Activated CD8-positive, alpha-beta T cell treated with anti-CD3 and anti-CD28 coated beads for 36 hours (primary cell): ENCODE measurements at regions of chr3 and their contacts with region 1.

Region 1: DNA sequence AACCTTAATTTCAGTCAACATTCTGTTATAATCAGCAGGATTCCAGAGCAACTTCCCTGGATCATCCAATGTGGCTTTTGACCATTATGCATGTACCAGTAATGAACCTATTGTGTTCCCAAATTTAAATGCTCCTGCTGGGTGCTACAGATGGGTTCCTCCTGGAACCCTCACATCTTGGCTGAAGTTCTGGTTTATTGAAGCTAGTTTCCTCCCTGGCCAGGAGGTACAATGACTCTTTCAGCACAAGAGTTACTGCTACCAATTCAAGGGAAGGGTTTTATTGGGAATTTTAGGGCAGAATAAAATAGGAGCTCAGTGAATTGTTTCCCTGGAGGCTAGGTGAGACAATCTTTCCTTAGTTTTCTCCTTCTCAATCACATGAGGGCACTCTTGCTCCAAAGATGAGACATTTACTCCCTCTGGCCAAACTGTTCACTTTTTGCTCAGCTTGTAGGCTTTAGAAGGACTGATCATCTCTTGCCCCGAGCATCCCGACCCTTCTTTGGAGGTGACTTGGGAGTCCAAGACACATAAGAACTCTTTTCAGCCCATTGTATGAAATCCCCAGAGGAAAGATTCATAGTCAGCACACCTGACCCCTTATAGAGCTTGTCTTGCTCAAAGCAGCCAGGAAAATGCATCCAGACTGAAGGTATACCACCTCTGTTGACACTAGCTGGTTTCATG is 8.8 kb upstream of the NPHP3 start:
- DNase-seq: no peak
- ATAC-seq: no peak
- H3K4me3 Mint-ChIP-seq: no peak overlapping the region
- H3K27ac Mint-ChIP-seq: no peak overlapping the region
- H3K4me1 Mint-ChIP-seq: no peaks in the 10 kb centered on the region
- H3K27me3 Mint-ChIP-seq: peaks cover 21% of the 10 kb centered on the region
- CTCF ChIP-seq: peak; percentile 35

Region 2: DNA sequence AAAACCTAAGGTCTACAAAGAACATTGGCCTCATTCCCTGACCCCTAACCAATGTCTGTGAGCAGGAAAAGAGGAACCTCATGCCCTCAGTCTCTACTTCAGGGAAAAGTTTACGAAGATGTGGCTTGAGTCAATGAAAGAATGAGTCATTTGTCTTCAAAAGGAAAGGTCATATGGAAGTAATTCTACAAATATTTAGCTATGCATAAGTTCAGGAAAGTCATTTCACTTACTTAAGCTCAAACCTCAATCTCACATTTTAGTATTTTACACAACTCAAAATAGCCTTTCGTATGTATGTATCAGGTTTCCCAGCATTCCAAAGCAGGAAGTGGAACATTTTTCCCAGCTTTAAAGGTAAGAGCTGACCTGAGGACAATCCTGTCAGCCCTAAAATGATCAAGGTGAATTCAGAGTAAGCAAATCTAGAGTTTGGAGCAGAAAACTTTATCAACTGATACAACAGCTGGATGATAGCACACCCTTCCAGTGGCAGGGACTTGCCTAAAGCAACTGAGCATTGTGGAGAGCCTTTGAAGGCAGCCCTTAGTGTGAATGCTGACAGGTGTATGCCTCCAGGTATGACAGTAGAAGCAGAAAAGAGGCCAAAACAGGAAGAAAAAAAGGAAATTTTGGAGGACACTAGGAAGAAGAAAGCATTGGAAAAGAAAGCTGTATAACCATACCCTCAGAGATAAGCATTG is 187.8 kb before region 1 on chr3:
- CTCF ChIA-PET with region 1: no interaction called
- POLR2A ChIA-PET with region 1: no interaction called
- intact Hi-C with region 1: no loop called
- DNase-seq: no peak
- ATAC-seq: peak; percentile 74
- H3K4me3 Mint-ChIP-seq: peak overlapping the region; percentile 13
- H3K27ac Mint-ChIP-seq: peak overlapping the region; percentile 90
- H3K4me1 Mint-ChIP-seq: peaks cover 51% of the 10 kb centered on the region
- H3K27me3 Mint-ChIP-seq: no peaks in the 10 kb centered on the region
- CTCF ChIP-seq: no peak

Region 3: DNA sequence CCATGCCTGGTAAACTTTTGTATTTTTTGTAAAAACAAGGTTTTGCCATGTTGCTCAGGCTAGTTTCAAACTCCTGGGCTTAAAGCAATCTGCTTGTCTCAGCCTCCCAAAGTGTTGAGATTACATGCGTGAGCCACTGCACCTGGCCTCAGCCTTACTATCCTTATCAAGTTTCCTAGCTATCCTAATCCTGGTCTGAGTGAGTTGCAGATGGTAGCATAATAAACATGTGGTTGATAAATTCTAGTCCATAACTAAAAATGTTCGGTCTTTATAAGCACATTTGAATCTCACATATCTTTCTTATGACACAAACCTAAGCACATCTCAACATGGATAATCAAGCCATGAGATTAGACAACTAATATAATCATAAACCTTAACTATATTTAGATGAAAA is 27.3 kb before region 1 on chr3:
- CTCF ChIA-PET with region 1: no interaction called
- POLR2A ChIA-PET with region 1: no interaction called
- intact Hi-C with region 1: no loop called
- DNase-seq: no peak
- ATAC-seq: no peak
- H3K4me3 Mint-ChIP-seq: no peak overlapping the region
- H3K27ac Mint-ChIP-seq: no peak overlapping the region
- H3K4me1 Mint-ChIP-seq: peaks cover 4% of the 10 kb centered on the region
- H3K27me3 Mint-ChIP-seq: no peaks in the 10 kb centered on the region
- CTCF ChIP-seq: no peak

Region 4: DNA sequence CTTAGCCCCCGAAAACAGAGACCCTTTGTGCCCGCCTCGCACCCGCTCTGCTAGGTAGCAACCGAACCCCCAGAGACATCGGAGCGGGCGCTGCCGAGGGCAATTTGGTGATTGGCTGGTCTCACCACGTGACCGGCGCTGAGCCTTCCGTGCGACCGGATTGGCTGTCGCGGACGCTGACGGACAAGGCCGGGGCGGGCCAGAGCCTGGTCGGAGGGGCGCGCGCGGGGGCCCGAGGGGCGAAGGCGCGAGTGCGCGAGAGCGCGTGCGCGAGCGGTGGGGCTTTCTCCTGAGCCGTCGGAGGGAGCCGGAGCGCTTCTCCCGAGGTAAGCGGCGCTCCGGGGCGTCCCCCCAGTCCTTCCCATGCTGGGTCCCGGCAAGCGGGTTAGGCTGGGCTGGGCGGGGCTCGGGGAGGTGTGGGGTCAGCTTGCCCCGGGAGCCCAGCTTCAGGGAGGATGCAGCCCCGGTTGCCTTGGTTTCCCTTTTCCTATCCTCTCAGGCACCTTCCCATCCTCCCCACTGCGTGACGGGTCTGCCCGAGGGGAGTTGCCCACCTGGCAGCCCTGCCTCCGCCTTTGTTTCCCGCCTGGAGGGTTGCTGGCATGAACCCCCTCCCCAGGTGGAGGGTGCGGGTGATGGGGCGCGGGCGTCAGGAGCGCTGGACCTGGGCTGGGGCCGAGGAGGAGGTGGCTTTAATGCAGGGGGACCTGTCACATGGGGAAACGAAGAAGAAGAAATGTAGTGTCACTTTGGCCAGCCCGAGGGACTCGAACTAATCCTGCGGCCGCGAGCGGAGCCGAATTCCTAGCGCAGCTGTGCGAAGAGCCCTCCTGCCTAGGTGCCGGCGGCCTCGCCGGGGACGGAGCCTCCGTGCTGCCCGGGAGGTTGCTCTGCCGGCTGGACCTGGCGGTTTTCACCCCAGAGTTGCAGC is 307.3 kb after region 1 on chr3 and contains the start of gene TMEM108:
- CTCF ChIA-PET with region 1: interaction called, 6 read pairs
- POLR2A ChIA-PET with region 1: no interaction called
- intact Hi-C with region 1: loop called (anchors 10 kb)
- DNase-seq: peak; percentile 46
- ATAC-seq: peak; percentile 65
- H3K4me3 Mint-ChIP-seq: peak within 1 kb of the TSS; percentile 20
- H3K27ac Mint-ChIP-seq: no peak within 1 kb of the TSS
- H3K4me1 Mint-ChIP-seq: no peaks in the 10 kb centered on the region
- H3K27me3 Mint-ChIP-seq: peaks cover 46% of the 10 kb centered on the region
- CTCF ChIP-seq: no peak
- total RNA-seq, gene TMEM108: not detected

Region 5: DNA sequence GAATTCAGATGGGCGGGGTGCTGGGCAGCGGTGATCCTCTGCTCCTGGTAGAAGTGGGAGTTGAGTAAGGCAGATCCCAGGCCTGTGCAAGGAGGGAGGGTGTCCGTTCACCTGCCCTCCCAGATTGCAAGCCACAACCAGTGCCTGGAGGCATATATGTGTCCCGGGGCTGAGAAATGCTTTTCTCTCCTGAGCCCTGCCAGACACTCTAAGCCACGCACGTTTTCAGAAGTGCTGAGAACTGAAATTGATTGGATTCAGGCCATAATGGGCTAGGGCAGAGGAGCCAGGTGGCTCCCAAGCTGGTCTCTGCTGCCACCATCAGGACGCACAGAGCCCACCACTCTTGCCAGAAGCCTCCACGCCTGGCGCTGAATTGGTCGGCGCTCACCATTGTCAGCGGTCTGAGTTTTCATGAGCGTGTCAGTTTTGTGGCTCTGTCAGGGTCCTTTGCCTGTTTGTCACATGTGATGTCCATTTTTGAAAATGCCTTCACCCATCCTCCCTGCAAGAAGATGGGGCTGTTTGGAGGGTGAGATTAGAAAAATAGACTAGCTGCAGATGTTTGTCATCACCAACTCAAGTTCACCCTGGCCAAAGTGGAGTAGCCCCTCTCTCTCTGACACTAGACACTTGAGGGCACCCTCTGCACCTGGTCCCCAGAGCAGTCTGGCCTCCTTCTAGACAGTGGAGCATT is 653.4 kb after region 1 on chr3:
- CTCF ChIA-PET with region 1: interaction called, 9 read pairs
- POLR2A ChIA-PET with region 1: no interaction called
- intact Hi-C with region 1: loop called (anchors 10 kb)
- DNase-seq: peak; percentile 51
- ATAC-seq: peak; percentile 86
- H3K4me3 Mint-ChIP-seq: no peak overlapping the region
- H3K27ac Mint-ChIP-seq: no peak overlapping the region
- H3K4me1 Mint-ChIP-seq: no peaks in the 10 kb centered on the region
- H3K27me3 Mint-ChIP-seq: no peaks in the 10 kb centered on the region
- CTCF ChIP-seq: peak; percentile 35

Region 6: GRCh38 chr3:133426721-133427120 is 695.7 kb after region 1 on chr3:
- CTCF ChIA-PET with region 1: interaction called, 22 read pairs
- POLR2A ChIA-PET with region 1: no interaction called
- intact Hi-C with region 1: loop called (anchors 5 kb)
- DNase-seq: no peak
- ATAC-seq: peak; percentile 41
- H3K4me3 Mint-ChIP-seq: no peak overlapping the region
- H3K27ac Mint-ChIP-seq: no peak overlapping the region
- H3K4me1 Mint-ChIP-seq: peaks cover 6% of the 10 kb centered on the region
- H3K27me3 Mint-ChIP-seq: no peaks in the 10 kb centered on the region
- CTCF ChIP-seq: no peak